IMR-90 (cell line): ENCODE measurements at regions of chr16 and their contacts with region 1.

Region 1: DNA sequence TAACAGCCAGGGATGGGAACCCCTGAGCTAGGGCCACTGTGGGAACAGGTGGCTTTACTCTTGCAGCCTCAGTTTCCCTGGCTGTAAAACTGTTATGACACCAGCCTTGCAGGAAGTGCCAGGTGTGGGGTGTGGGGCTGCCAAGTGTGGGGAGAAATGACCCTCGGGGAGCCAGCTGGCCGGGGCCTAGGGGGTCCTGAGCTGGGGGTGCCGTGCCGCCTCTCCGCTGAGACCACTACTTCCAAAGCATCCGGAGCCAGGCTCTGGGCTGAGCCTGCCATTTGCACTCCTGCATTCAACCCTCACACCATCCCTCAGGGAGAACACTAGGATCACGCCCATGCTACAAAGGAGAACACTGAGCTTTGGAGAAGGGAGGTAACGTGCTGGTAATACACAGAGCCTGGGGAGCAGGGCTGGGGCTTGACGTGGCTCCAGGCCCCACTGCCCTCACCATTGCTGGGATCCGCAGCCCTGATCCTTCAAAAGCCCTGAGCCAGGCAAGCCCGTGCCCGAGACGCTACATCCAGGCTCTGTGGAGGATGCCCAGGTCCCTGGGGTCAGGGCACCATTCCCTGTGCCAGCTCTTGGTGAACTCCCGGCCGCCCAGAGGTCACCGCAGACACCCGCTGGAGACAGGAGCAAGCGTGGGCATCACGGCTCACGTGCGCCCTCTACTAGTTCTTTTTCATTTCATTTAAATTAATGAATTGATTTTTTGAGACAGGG is 28.8 kb upstream of the GINS2 start:
- DNase-seq: peak; percentile 47
- ATAC-seq: peak; percentile 75
- H3K4me3 ChIP-seq: no peak overlapping the region
- H3K27ac ChIP-seq: no peak overlapping the region
- H3K4me1 ChIP-seq: peaks cover 3% of the 10 kb centered on the region; the same call in 1 of the 2 replicates
- H3K27me3 ChIP-seq: no peaks in the 10 kb centered on the region; the same call in 1 of the 2 replicates
- CTCF ChIP-seq: peak; percentile 71
- POLR2A ChIP-seq: no peak
- RAD21 ChIP-seq: peak; percentile 68

Region 2: GRCh38 chr16:85114909-85115567 is 602.5 kb before region 1 on chr16:
- CTCF ChIA-PET with region 1: no interaction called
- POLR2A ChIA-PET with region 1: no interaction called
- dilution Hi-C with region 1: no loop called
- in situ Hi-C with region 1: no loop called
- intact Hi-C with region 1: no loop called
- DNase-seq: peak; percentile 74
- ATAC-seq: peak; percentile 99
- H3K4me3 ChIP-seq: no peak overlapping the region
- H3K27ac ChIP-seq: peak overlapping the region; percentile 5; the same call in 1 of the 2 replicates
- H3K4me1 ChIP-seq: no peaks in the 10 kb centered on the region; the same call in 1 of the 2 replicates
- H3K27me3 ChIP-seq: no peaks in the 10 kb centered on the region
- CTCF ChIP-seq: peak; percentile 97
- POLR2A ChIP-seq: peak; percentile 51; the same call in 1 of the 2 replicates
- RAD21 ChIP-seq: peak; percentile 99

Region 3: DNA sequence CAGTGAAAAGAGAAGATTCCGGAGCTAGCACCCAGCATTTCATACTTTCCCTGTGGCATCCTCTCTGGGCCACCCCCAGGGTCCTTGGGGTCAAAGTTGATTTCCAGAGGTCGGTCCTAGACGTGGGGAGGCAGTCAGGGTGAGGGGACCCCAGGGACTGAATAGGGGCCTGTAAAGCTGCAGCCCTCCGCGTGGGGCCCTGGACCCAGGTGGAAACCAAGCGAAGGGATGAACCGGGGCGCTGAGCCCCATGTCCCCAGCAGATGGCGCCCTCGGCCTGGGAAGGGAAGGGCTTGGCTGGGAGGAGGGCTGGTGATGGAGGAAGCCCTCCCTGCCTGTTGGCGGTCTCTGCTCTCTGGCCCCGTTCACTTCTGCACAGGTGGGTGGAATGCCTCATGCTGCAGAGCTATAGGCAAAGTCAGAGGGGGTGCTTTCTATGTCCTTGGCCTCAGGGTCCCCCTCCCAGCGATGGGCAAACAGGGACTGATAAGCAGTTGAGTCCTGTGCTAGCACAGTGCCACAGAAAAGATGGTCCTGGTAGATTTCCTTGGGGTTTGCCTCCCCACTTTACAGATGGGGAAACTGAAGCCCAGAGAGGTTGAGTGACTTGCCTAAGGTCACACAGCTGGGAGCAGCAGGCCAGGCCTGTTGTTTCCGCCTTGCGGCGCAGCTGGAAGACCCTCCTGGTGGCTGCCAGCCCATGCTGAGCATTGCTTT is 441.9 kb before region 1 on chr16:
- CTCF ChIA-PET with region 1: no interaction called
- POLR2A ChIA-PET with region 1: no interaction called
- dilution Hi-C with region 1: no loop called
- in situ Hi-C with region 1: no loop called
- intact Hi-C with region 1: loop called (anchors 10 kb)
- DNase-seq: peak; percentile 41
- ATAC-seq: peak; percentile 89
- H3K4me3 ChIP-seq: no peak overlapping the region
- H3K27ac ChIP-seq: no peak overlapping the region
- H3K4me1 ChIP-seq: peaks cover 4% of the 10 kb centered on the region; the same call in 1 of the 2 replicates
- H3K27me3 ChIP-seq: no peaks in the 10 kb centered on the region
- CTCF ChIP-seq: peak; percentile 85
- POLR2A ChIP-seq: no peak
- RAD21 ChIP-seq: peak; percentile 90

Region 4: GRCh38 chr16:85659805-85660495 is 57.6 kb before region 1 on chr16:
- CTCF ChIA-PET with region 1: no interaction called
- POLR2A ChIA-PET with region 1: no interaction called
- dilution Hi-C with region 1: no loop called
- in situ Hi-C with region 1: loop called (anchors 5 kb)
- intact Hi-C with region 1: loop called (anchors 5 kb)
- DNase-seq: peak; percentile 41
- ATAC-seq: peak; percentile 97
- H3K4me3 ChIP-seq: no peak overlapping the region
- H3K27ac ChIP-seq: no peak overlapping the region
- H3K4me1 ChIP-seq: no peaks in the 10 kb centered on the region; the same call in 1 of the 2 replicates
- H3K27me3 ChIP-seq: no peaks in the 10 kb centered on the region
- CTCF ChIP-seq: peak; percentile 78
- POLR2A ChIP-seq: no peak
- RAD21 ChIP-seq: peak; percentile 70

Region 5: GRCh38 chr16:85675251-85675927 is 42.2 kb before region 1 on chr16:
- CTCF ChIA-PET with region 1: no interaction called
- POLR2A ChIA-PET with region 1: no interaction called
- dilution Hi-C with region 1: no loop called
- in situ Hi-C with region 1: no loop called
- intact Hi-C with region 1: loop called (anchors 2 kb)
- DNase-seq: peak; percentile 56
- ATAC-seq: peak; percentile 53
- H3K4me3 ChIP-seq: no peak overlapping the region
- H3K27ac ChIP-seq: no peak overlapping the region
- H3K4me1 ChIP-seq: peaks cover 11% of the 10 kb centered on the region
- H3K27me3 ChIP-seq: no peaks in the 10 kb centered on the region
- CTCF ChIP-seq: peak; percentile 57
- POLR2A ChIP-seq: no peak
- RAD21 ChIP-seq: peak; percentile 48

Region 6: DNA sequence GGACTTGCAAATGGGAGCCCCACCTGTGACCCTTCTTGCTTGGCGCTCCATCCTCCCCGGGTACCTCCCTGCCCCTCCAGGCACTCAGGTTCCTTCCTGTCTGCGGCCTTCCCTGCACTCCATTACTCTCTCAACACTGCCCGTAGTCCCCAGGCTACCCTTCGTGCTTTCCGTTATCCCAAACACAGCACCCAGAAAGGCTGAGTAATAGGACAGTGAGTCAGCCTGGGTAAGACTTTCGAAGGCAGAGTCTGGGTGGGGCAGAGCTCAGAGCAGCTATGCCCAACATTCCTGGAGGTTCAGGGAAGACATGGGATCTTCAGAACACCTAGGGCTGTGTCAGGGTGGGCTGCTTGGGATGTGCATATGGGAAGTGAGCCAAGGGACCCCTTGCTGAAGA is 50.0 kb after region 1 on chr16:
- CTCF ChIA-PET with region 1: no interaction called
- POLR2A ChIA-PET with region 1: no interaction called
- dilution Hi-C with region 1: no loop called
- in situ Hi-C with region 1: no loop called
- intact Hi-C with region 1: no loop called
- DNase-seq: peak; percentile 88
- ATAC-seq: peak; percentile 99
- H3K4me3 ChIP-seq: no peak overlapping the region
- H3K27ac ChIP-seq: peak overlapping the region; percentile 71
- H3K4me1 ChIP-seq: peaks cover 10% of the 10 kb centered on the region
- H3K27me3 ChIP-seq: no peaks in the 10 kb centered on the region
- CTCF ChIP-seq: no peak
- POLR2A ChIP-seq: peak; percentile 11; the same call in 1 of the 2 replicates
- RAD21 ChIP-seq: no peak; the same call in 1 of the 2 replicates

Region 7: DNA sequence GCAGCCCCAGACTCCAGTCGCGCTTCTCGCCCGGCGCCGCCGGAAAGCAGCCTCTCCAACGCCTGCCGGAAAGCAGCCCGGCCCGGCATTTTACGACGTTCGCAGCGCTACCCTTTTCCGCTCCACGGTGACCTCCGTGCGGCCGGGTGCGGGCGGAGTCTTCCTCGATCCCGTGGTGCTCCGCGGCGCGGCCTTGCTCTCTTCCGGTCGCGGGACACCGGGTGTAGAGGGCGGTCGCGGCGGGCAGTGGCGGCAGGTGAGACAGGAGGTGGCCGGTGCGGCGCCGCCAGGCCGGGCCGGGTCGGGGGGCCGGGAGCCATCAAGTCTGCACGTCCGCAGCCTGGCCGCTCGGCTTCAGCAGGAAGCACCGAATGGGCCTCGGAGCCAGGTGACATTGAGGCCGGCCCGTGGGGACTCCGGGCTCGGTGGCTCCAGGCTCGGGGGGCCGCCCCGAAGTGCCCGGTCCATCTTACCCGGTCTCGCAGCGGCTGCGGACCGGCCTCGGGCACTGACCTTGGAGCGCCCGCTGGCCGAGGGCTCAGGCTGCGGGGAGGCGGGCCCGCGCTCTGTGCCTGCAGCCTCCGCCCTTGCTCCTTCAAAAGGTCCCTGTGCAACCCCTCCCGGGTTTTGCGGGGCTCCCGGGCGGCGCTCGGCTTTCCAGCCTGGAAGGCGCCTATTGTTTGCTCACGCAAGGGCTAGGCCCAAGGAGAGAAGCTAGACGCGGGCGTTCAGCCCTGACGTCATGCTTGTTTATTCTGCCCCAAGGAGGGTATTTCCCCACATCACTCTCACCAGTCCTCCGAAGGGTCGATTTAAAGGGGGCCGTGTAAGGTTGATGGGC is 82.2 kb after region 1 on chr16 and contains the starts of genes COX4I1 and EMC8:
- CTCF ChIA-PET with region 1: no interaction called
- POLR2A ChIA-PET with region 1: no interaction called
- dilution Hi-C with region 1: no loop called
- in situ Hi-C with region 1: no loop called
- intact Hi-C with region 1: loop called (anchors 1 kb)
- DNase-seq: peak; percentile 92
- ATAC-seq: peak; percentile 93
- H3K4me3 ChIP-seq: peak within 1 kb of the TSS; percentile 94
- H3K27ac ChIP-seq: peak within 1 kb of the TSS; percentile 74
- H3K4me1 ChIP-seq: peaks cover 2% of the 10 kb centered on the region; the same call in 1 of the 2 replicates
- H3K27me3 ChIP-seq: no peaks in the 10 kb centered on the region
- CTCF ChIP-seq: no peak
- POLR2A ChIP-seq: peak; percentile 83
- RAD21 ChIP-seq: no peak
- total RNA-seq, gene COX4I1: 392 and 397 TPM in 2 replicates
- total RNA-seq, gene EMC8: 23.7 and 28.3 TPM in 2 replicates

Region 8: DNA sequence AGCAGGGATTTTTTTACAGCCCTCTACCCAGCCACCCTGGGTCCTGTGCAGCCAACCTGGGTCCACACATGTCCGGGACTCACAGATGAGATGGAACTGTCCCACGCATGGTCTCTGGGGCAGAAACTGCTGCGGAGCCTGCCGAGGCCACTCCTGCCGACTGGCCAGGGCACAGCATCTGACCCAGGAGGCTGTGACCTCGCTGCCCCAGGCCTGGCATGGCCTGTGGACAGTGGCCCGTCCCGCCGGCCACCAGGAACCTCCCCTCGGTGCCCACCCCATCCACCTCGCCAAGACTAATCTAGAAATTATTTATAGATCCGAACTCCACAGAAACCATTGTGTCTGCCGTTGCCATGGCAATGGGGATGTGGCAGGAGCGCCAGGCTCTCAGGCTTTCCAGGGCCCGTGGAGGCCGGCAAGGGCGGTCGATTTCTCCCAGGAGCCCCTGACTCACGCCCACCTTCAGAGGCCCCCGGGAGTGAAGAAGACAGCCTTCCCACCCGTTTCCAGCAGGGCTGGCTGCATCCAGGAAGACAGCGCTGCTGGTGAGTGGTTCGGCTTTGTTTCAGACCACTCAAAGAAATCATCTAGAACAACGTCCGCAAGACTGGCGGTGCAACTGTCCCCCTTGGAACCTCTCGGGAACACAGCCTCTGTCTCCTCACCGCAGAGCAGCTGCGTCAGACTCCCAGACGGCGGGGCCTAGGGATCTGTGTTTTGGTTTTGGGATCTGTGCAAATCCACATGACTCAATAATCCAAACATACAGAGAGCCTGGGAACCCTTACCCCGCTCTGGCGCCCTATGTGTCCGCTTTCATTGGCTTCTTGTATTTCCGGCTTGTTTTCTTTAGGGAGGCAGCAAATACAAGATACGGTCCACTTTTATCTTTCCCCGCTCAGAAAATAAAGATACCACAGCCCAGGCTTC is 1823.7 kb after region 1 on chr16:
- CTCF ChIA-PET with region 1: no interaction called
- POLR2A ChIA-PET with region 1: no interaction called
- dilution Hi-C with region 1: no loop called
- in situ Hi-C with region 1: no loop called
- intact Hi-C with region 1: no loop called
- DNase-seq: peak; percentile 79
- ATAC-seq: peak; percentile 96
- H3K4me3 ChIP-seq: no peak overlapping the region; the same call in 1 of the 2 replicates
- H3K27ac ChIP-seq: no peak overlapping the region
- H3K4me1 ChIP-seq: peaks cover 11% of the 10 kb centered on the region
- H3K27me3 ChIP-seq: peaks cover 23% of the 10 kb centered on the region
- CTCF ChIP-seq: no peak
- POLR2A ChIP-seq: no peak
- RAD21 ChIP-seq: no peak